ENCODE measurements at regions of chr10 and their contacts with region 1.

Region 1: DNA sequence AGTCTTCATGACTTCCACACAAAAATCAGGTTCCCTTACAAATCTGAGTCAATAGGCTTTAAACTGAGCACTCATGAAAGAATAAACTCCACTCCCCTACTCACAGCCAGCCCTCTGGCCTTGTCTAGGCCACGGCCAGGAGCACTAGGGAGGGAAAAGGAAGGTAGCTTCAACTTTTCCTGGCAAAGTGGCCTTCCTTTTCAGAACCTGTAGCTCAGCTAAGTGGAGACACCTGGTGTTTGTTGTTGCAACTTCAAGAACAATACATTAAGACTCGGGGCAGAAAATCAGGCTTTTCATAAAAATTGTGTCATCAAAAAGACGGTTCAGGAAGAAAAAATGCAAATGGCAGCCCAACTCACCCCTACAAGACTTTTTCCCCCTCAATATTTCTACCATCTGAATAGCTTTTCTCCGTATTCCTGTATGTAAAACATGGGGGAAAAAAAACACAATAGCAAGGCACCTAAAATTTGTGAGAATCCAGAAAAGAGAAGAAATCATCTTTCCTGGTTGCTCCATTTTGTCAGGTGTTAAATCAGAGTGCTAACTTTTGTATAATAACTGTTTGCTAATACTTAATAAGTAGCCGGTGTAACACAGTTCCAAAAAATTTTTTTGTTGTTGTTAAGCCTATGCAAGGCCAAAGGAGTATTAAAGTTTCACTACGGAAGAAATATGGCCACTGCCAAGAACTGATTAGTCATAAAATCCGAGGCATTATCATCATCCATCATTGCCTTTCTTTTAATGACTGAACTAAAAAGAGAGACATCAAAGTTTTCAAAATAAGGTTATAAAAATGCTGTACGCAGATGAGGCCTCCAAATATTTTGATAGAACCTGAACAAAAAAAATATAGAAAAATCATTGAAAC is 66.2 kb upstream of the ARID5B start:
- DNase-seq: peak; percentile 78
- ATAC-seq: peak; percentile 59
- H3K4me3 ChIP-seq: no peak overlapping the region
- H3K27ac ChIP-seq: peak overlapping the region; percentile 39; the same call in 1 of the 2 replicates
- H3K4me1 ChIP-seq: peaks cover 14% of the 10 kb centered on the region
- H3K27me3 ChIP-seq: no peaks in the 10 kb centered on the region
- CTCF ChIP-seq: peak; percentile 50
- POLR2A ChIP-seq: no peak
- RAD21 ChIP-seq: peak; percentile 62

Region 2: DNA sequence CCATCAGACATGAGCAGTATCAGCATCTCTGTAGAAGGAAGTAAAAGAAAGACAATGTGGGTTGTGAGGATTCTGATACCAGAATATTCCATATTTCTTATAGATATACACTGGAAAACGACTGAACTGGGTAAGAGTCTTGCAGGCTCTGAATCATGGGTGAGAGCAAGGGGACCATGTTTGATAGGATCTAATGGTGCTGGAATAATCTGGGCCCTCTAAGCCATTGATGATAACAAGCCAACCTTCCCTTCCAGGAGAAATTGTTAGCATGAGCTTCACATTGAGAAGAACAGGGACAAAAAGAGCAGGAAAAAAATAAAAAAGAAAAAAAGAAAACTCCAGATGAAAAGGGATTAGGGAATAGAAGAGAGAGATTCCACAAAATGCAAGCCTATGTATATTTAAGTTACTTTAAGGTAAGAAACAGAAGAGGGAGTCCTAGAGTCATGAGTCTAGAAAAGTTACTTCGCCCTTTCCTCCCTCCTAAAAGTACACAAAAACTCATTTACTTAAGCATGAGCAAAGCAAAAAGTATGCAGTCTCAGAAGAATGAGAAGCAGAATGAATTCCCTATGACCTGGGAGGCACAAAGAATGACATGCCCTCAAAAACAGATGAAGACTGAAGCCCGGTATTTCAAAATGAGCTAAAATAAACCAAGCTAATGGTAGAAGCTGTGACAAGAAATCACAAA is 564.0 kb before region 1 on chr10:
- CTCF ChIA-PET with region 1: no interaction called
- POLR2A ChIA-PET with region 1: no interaction called
- dilution Hi-C with region 1: no loop called
- in situ Hi-C with region 1: no loop called
- intact Hi-C with region 1: loop called (anchors 5 kb)
- DNase-seq: peak; percentile 84
- ATAC-seq: peak; percentile 98
- H3K4me3 ChIP-seq: no peak overlapping the region
- H3K27ac ChIP-seq: peak overlapping the region; percentile 66
- H3K4me1 ChIP-seq: 0 out of 2 replicates have a peak, but pooled peaks cover 2% of the 10 kb centered on the region
- H3K27me3 ChIP-seq: no peaks in the 10 kb centered on the region
- CTCF ChIP-seq: peak; percentile 55
- POLR2A ChIP-seq: no peak
- RAD21 ChIP-seq: peak; percentile 39

Region 3: GRCh38 chr10:61463035-61463909 is 372.0 kb before region 1 on chr10:
- CTCF ChIA-PET with region 1: no interaction called
- POLR2A ChIA-PET with region 1: no interaction called
- dilution Hi-C with region 1: no loop called
- in situ Hi-C with region 1: no loop called
- intact Hi-C with region 1: loop called (anchors 5 kb)
- DNase-seq: peak; percentile 85
- ATAC-seq: peak; percentile 76
- H3K4me3 ChIP-seq: no peak overlapping the region
- H3K27ac ChIP-seq: no peak overlapping the region
- H3K4me1 ChIP-seq: peaks cover 10% of the 10 kb centered on the region
- H3K27me3 ChIP-seq: no peaks in the 10 kb centered on the region
- CTCF ChIP-seq: no peak
- POLR2A ChIP-seq: no peak
- RAD21 ChIP-seq: no peak

Region 4: DNA sequence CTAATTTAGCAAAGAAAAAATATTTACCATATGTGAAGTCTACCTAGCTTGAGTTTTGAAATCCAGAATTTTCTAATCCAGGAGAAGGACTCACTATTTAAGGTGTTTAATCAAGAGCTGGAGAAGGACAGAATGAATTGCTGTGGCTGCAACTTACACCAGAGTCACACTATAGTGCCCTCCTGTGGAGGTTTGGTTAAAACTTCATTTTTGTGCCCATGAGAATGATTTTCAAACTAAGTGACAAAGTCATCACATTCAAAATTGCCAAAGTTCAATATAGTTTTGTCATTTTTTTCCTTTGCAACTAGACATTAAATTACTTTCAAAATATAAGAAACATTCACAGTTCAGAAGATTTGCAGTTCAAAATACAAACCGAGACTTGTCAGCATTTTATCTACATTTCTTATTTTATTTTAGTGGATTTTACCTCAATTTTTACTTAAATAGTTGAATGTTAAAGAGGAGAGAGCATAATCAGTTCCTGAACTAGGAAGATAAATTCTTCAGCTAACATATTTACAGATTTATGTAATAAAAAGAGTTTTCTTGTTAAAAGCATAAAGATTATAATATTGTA is 101.9 kb before region 1 on chr10:
- CTCF ChIA-PET with region 1: no interaction called
- POLR2A ChIA-PET with region 1: no interaction called
- dilution Hi-C with region 1: no loop called
- in situ Hi-C with region 1: no loop called
- intact Hi-C with region 1: loop called (anchors 1 kb)
- DNase-seq: peak; percentile 64
- ATAC-seq: peak; percentile 54; the same call in 1 of the 2 replicates
- H3K4me3 ChIP-seq: no peak overlapping the region
- H3K27ac ChIP-seq: no peak overlapping the region
- H3K4me1 ChIP-seq: no peaks in the 10 kb centered on the region
- H3K27me3 ChIP-seq: no peaks in the 10 kb centered on the region
- CTCF ChIP-seq: peak; percentile 72
- POLR2A ChIP-seq: 0 out of 2 replicates have a peak, but pooled peaks have one; percentile 22
- RAD21 ChIP-seq: peak; percentile 79

Region 5: GRCh38 chr10:61750929-61751471 is 84.3 kb before region 1 on chr10:
- CTCF ChIA-PET with region 1: interaction called, 14 read pairs
- POLR2A ChIA-PET with region 1: no interaction called
- dilution Hi-C with region 1: no loop called
- in situ Hi-C with region 1: no loop called
- intact Hi-C with region 1: loop called (anchors 1 kb)
- DNase-seq: peak; percentile 69
- ATAC-seq: peak; percentile 50
- H3K4me3 ChIP-seq: no peak overlapping the region
- H3K27ac ChIP-seq: peak overlapping the region; percentile 77
- H3K4me1 ChIP-seq: peaks cover 12% of the 10 kb centered on the region
- H3K27me3 ChIP-seq: no peaks in the 10 kb centered on the region
- CTCF ChIP-seq: peak; percentile 70
- POLR2A ChIP-seq: no peak
- RAD21 ChIP-seq: peak; percentile 80

Region 6: GRCh38 chr10:61793760-61794703 is 41.3 kb before region 1 on chr10:
- CTCF ChIA-PET with region 1: no interaction called
- POLR2A ChIA-PET with region 1: no interaction called
- dilution Hi-C with region 1: no loop called
- in situ Hi-C with region 1: no loop called
- intact Hi-C with region 1: loop called (anchors 1 kb)
- DNase-seq: peak; percentile 79
- ATAC-seq: peak; percentile 41
- H3K4me3 ChIP-seq: no peak overlapping the region
- H3K27ac ChIP-seq: peak overlapping the region; percentile 80
- H3K4me1 ChIP-seq: peaks cover 19% of the 10 kb centered on the region
- H3K27me3 ChIP-seq: no peaks in the 10 kb centered on the region
- CTCF ChIP-seq: no peak
- POLR2A ChIP-seq: no peak
- RAD21 ChIP-seq: no peak